ENCODE measurements at regions of chr2 and their contacts with region 1.

Region 1: DNA sequence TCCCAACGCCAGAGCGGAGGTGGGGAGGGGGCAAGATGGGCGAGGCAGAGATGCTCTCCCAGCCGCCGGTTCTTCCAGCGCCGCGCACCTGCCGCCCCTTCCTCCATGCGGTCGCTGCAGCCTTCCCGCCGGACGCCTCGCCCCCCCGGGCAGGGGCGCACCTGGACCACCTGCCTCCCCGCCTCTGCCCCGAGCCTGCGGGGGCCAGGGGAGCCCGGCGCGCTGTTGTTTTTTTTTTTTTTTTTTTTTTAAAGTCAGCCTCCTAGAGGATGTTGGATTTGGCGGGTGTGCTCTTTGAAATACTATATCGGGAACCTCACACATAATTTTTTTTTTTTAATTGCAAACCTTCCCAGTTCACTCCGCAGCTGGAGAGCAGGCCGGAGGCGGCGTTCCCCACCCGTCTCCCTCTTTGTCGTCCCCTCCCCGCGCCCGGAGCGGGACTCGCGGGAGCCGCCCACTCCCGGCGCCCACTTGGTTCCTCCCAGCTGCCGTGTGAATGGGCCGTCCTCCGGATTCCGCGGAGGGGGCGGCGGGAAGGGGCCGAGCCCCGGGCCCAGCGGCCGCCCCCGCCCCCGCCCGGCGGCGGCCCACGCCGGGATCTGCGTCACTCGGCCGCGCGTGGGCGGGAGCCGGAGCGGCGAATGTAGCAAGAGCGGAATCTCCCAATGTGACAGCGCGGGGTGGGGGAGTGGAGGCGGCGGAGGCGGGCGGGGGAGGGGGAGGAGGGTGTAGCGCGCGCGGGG is 421 bp upstream of the NAB1 start:
- DNase-seq: peak; percentile 94
- ATAC-seq: peak; percentile 77
- H3K4me3 ChIP-seq: peak overlapping the region; percentile 34 to 89 (median 68)
- H3K4me3 Mint-ChIP-seq: peak overlapping the region; percentile 89
- H3K27ac ChIP-seq: peak overlapping the region; percentile 66 to 82
- H3K27ac Mint-ChIP-seq: peak overlapping the region; percentile 82
- H3K4me1 ChIP-seq: peaks cover 8 to 14% of the 10 kb centered on the region in 2 donors
- H3K4me1 Mint-ChIP-seq: peaks cover 25% of the 10 kb centered on the region
- H3K27me3 ChIP-seq: no peaks in the 10 kb centered on the region
- H3K27me3 Mint-ChIP-seq: no peaks in the 10 kb centered on the region
- CTCF ChIP-seq: no peak

Region 2: GRCh38 chr2:189762551-189763298 is 885.7 kb before region 1 on chr2 and contains the start of gene OSGEPL1:
- CTCF ChIA-PET with region 1: no interaction called
- POLR2A ChIA-PET with region 1: no interaction called
- intact Hi-C with region 1: loop called (anchors 2 kb)
- DNase-seq: peak; percentile 96
- ATAC-seq: peak; percentile 92
- H3K4me3 ChIP-seq: peak within 1 kb of the TSS; percentile 67 to 100 (median 95)
- H3K4me3 Mint-ChIP-seq: peak within 1 kb of the TSS; percentile 98
- H3K27ac ChIP-seq: peak within 1 kb of the TSS; percentile 77 to 89
- H3K27ac Mint-ChIP-seq: peak within 1 kb of the TSS; percentile 98
- H3K4me1 ChIP-seq: peaks cover 9 to 10% of the 10 kb centered on the region in 2 donors
- H3K4me1 Mint-ChIP-seq: peaks cover 6% of the 10 kb centered on the region
- H3K27me3 ChIP-seq: no peaks in the 10 kb centered on the region
- H3K27me3 Mint-ChIP-seq: no peaks in the 10 kb centered on the region
- CTCF ChIP-seq: peak; percentile 73
- total RNA-seq, gene OSGEPL1: 11.2 and 12.6 TPM in 2 replicates

Region 3: DNA sequence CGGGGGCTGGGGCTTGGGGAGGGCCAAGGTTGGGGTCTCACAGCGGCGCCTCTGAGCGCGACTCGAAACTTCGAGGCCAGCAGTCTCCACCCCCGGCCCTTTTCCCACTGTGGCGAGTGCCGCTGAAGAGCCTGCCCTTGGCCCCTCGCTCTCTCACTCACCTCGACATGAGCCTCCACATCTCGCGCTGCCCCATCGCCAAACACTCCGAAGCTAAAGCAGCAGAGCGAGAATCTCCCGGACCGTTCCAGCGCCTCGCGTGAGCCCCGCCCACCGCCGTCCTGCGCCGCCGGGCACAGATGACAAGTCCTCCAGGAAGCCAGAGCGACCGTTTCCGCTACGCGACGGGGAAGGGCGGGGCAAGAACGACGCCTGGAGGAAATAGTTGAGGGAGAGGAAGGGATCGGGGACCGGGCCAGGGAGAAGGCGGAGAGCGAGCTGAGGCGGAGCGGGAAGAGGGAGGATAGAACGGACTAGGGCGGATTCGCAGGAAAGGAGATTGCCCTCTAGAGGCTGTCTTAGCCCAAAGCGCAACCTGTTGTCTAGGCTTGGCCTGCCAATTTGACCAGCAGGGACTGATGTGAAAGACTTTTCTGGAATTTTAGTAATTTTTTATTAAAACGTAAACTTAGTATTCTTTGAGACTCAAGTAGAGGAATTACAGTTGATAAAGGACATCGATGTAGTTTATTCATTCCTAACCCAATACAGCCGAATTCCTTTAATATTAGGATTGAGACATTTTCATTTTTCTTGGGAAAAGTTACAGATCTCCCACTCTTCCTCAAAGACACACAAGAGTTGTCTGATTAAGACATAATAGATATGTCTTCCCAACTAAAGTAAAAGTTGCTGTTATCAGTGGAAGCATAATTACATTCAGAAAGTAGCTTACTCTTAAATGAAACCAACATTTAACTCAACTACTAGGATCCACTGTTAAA is 328.6 kb before region 1 on chr2 and contains the start of gene HIBCH:
- CTCF ChIA-PET with region 1: no interaction called
- POLR2A ChIA-PET with region 1: no interaction called
- intact Hi-C with region 1: loop called (anchors 2 kb)
- DNase-seq: peak; percentile 85
- ATAC-seq: peak; percentile 94
- H3K4me3 ChIP-seq: peak within 1 kb of the TSS; percentile 73 to 87 (median 79)
- H3K4me3 Mint-ChIP-seq: peak within 1 kb of the TSS; percentile 95
- H3K27ac ChIP-seq: peak within 1 kb of the TSS; percentile 80 to 84
- H3K27ac Mint-ChIP-seq: peak within 1 kb of the TSS; percentile 95
- H3K4me1 ChIP-seq: peaks cover 20 to 26% of the 10 kb centered on the region in 2 donors
- H3K4me1 Mint-ChIP-seq: peaks cover 42% of the 10 kb centered on the region
- H3K27me3 ChIP-seq: no peaks in the 10 kb centered on the region
- H3K27me3 Mint-ChIP-seq: peaks cover 8% of the 10 kb centered on the region
- CTCF ChIP-seq: peak; percentile 77
- total RNA-seq, gene HIBCH: 30.2 and 36.9 TPM in 2 replicates

Region 4: DNA sequence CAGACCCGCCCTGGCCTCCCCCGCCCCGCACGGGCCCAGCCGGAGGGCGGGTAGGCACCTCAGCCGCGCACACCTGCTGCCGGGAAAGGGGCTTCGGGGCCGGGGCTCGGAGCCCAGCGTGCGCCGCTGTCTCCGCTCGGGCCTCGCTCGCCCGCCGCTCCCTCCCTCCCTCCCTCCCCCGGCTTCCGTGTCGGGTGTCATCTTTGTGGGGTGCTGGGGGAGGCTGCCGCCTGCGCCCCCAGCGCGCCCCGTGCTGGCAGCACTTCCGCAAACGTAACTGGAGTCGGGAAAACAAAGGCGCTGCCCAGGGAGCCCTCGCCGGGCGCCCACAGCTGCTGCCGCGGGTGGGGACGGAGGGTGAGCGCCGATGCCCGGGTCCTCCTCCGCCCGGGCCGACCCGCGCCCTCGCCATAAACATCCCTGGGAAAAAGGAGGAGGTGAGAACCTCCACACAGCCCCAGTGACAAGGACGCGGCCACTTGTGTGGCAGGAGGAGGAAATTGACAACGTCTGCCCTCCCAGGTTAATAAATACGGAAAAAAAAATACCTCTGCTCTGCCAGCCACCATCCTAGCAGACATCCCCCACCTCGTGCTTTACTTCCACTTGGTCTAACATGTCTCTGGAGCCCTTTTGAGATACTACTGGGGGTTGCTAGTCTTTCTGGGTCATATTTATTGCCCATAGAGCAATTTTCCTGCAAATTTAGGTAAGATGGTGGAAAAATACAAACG is 239.8 kb before region 1 on chr2:
- CTCF ChIA-PET with region 1: no interaction called
- POLR2A ChIA-PET with region 1: no interaction called
- intact Hi-C with region 1: loop called (anchors 1 kb)
- DNase-seq: peak; percentile 90
- ATAC-seq: peak; percentile 70
- H3K4me3 ChIP-seq: peak overlapping the region; percentile 56 to 87 (median 76)
- H3K4me3 Mint-ChIP-seq: peak overlapping the region; percentile 91
- H3K27ac ChIP-seq: peak overlapping the region; percentile 83 to 95
- H3K27ac Mint-ChIP-seq: peak overlapping the region; percentile 95
- H3K4me1 ChIP-seq: peaks cover 20 to 24% of the 10 kb centered on the region in 2 donors
- H3K4me1 Mint-ChIP-seq: peaks cover 42% of the 10 kb centered on the region
- H3K27me3 ChIP-seq: no peaks in the 10 kb centered on the region
- H3K27me3 Mint-ChIP-seq: no peaks in the 10 kb centered on the region
- CTCF ChIP-seq: no peak

Region 5: GRCh38 chr2:190679813-190680591 is 31.5 kb after region 1 on chr2:
- CTCF ChIA-PET with region 1: interaction called, 41 read pairs
- POLR2A ChIA-PET with region 1: interaction called, 4 read pairs
- intact Hi-C with region 1: loop called (anchors 2 kb)
- DNase-seq: peak; percentile 72
- ATAC-seq: peak; percentile 86
- H3K4me3 ChIP-seq: peak overlapping the region in 1 of 5 experiments; percentile 1
- H3K4me3 Mint-ChIP-seq: peak overlapping the region; percentile 62
- H3K27ac ChIP-seq: peak overlapping the region; percentile 27 to 37
- H3K27ac Mint-ChIP-seq: peak overlapping the region; percentile 88
- H3K4me1 ChIP-seq: peaks cover 14 to 21% of the 10 kb centered on the region in 2 donors
- H3K4me1 Mint-ChIP-seq: peaks cover 38% of the 10 kb centered on the region
- H3K27me3 ChIP-seq: no peaks in the 10 kb centered on the region
- H3K27me3 Mint-ChIP-seq: no peaks in the 10 kb centered on the region
- CTCF ChIP-seq: peak; percentile 78

Region 6: DNA sequence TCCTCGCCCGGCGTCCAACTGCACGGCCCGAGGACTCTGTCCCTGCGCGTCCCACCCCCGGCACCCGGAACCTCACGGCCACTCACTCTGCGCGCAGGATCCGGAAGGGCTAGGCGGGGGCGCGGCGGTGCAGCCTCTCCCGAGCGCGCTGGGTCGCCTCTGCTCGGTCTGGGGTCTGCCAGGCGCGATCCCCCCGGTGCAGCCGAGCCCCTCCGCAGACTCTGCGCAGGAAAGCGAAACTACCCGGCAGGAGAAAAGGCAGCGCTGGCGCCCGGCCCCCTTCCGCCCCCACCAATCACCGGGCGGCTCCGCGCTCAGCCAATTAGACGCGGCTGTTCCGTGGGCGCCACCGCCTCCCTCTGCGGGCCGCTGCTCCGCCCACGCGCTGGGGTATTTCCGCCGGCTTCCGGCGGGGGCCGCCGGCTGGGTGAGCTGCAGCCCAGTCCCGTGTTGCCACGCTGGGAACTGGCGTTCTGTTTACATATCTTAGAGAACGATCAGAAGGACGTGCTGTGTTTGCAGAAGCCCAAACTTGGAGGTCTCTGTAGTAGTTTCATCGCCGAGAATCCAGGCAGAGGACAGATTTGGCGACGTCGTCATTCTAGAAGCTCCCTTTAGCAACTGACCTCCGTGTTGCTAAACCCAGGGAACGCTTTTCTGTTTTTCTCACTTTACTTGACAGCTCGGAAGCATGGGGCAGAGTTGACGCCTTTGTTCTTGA is 365.6 kb after region 1 on chr2 and contains the start of gene STAT1:
- CTCF ChIA-PET with region 1: no interaction called
- POLR2A ChIA-PET with region 1: no interaction called
- intact Hi-C with region 1: loop called (anchors 2 kb)
- DNase-seq: peak; percentile 96
- ATAC-seq: peak; percentile 93
- H3K4me3 ChIP-seq: peak within 1 kb of the TSS; percentile 81 to 96 (median 92)
- H3K4me3 Mint-ChIP-seq: no peak within 1 kb of the TSS
- H3K27ac ChIP-seq: peak within 1 kb of the TSS; percentile 84 to 93
- H3K27ac Mint-ChIP-seq: no peak within 1 kb of the TSS
- H3K4me1 ChIP-seq: peaks cover 35 to 42% of the 10 kb centered on the region in 2 donors
- H3K4me1 Mint-ChIP-seq: peaks cover 23% of the 10 kb centered on the region
- H3K27me3 ChIP-seq: no peaks in the 10 kb centered on the region
- H3K27me3 Mint-ChIP-seq: no peaks in the 10 kb centered on the region
- CTCF ChIP-seq: no peak
- total RNA-seq, gene STAT1: 50.9 and 53.8 TPM in 2 replicates